Lower leg skin (tissue), 4 donors: ENCODE measurements at regions of chr12 and their contacts with region 1.

Region 1: GRCh38 chr12:30850684-30851083 is 75.9 kb upstream of the TSPAN11 start:
- DNase-seq: no peak
- H3K4me3 ChIP-seq: no peak overlapping the region
- CTCF ChIP-seq: no peak
- POLR2A ChIP-seq: no peak

Region 2: GRCh38 chr12:30985814-30986452 is 135.2 kb after region 1 on chr12:
- intact Hi-C with region 1: loop called (anchors 10 kb)
- DNase-seq: peak in 1 of 2 donors; percentile 28
- H3K4me3 ChIP-seq: no peak overlapping the region
- CTCF ChIP-seq: no peak
- POLR2A ChIP-seq: no peak

Region 3: GRCh38 chr12:31267966-31268365 is 417.3 kb after region 1 on chr12:
- intact Hi-C with region 1: loop called (anchors 10 kb)
- DNase-seq: no peak
- H3K4me3 ChIP-seq: no peak overlapping the region
- CTCF ChIP-seq: no peak
- POLR2A ChIP-seq: no peak